ENCODE measurements at regions of chr3 and their contacts with region 1.

Region 1: DNA sequence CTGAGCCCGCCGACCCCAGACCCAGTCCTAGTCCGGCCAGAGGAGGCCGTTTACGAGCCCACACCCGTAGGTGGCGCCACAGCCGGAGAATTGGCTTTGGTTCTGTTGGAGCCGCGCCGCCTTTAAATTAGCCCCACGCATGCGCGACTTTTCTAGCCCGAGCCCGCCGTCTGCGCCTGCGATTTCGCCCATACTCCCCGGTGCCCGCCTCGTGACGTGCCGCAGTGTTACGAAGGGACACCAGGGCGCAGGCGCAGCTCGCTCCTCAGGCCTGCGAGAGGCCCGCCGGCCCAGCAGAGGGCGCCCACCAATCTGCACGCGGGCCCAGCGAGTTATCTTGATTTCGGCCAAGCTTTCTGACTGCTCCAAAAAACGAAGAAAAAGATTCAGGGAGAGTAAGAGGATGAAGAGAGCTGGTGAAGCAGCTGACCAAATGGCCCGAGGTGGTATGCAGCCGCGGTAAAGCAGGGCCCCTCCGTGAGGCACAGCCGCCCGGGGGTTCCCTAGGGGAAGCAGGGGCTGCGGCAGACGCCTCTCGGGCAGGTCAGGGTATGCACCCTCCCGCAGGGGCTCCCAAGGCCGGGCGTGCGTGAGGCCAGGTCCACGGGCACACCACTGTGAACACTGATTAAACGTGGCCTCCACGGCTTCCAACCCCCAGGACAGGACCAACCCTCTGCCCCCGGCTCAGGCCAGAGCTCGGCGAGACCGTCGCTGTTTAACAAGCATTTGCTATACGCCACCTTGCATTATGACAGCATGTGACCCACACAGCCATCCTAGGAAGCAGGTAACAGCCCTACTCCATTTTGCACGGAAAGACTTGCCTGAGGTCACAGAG is 32.8 kb downstream of the RPN1 start:
- DNase-seq: peak; percentile 98 to 99 (median 99)
- H3K4me3 ChIP-seq: peak overlapping the region; percentile 81 to 91
- H3K4me3 Mint-ChIP-seq: peak overlapping the region; percentile 93 to 99 (median 96)
- H3K27ac ChIP-seq: peak overlapping the region; percentile 88
- H3K27ac Mint-ChIP-seq: peak overlapping the region; percentile 93 to 99 (median 98)
- H3K4me1 ChIP-seq: peaks cover 23% of the 10 kb centered on the region
- H3K4me1 Mint-ChIP-seq: peaks cover 17 to 30% (median 23%) of the 10 kb centered on the region in 4 donors
- H3K27me3 ChIP-seq: no peaks in the 10 kb centered on the region
- H3K27me3 Mint-ChIP-seq: no peaks in the 10 kb centered on the region

Region 2: DNA sequence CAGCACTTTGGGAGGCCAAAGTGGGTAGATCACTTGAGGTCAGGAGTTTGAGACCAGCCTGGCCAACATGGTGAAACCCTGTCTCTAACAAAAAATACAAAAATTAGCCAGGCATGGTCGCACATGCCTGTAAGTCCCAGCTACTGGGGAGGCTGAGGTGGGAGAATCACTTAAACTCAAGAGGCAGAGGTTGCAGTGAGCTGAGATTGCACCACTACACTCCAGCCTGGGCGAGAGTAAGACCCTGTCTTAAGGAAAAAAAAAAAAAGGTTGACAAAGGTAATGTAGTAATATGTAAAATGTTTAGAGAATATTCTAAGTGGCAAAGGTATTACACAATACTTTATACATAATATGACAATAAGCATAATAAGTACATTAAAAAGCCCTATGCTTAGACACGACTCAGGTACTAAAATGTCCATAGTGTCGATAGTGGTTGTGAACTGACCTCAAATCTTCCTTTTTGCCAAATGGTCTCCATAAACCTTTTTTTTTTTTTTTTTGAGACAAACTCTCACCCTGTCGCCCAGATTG is 16.4 kb after region 1 on chr3:
- CTCF ChIA-PET with region 1: interaction called, 11 read pairs
- POLR2A ChIA-PET with region 1: interaction called, 4 read pairs
- intact Hi-C with region 1: no loop called
- DNase-seq: no peak
- H3K4me3 ChIP-seq: no peak overlapping the region
- H3K4me3 Mint-ChIP-seq: no peak overlapping the region
- H3K27ac ChIP-seq: no peak overlapping the region
- H3K27ac Mint-ChIP-seq: peak overlapping the region in 1 of 7 donors; percentile 52
- H3K4me1 ChIP-seq: no peaks in the 10 kb centered on the region
- H3K4me1 Mint-ChIP-seq: peaks cover 7 to 17% (median 16%) of the 10 kb centered on the region in 4 donors
- H3K27me3 ChIP-seq: no peaks in the 10 kb centered on the region
- H3K27me3 Mint-ChIP-seq: no peaks in the 10 kb centered on the region

Region 3: GRCh38 chr3:128725932-128726690 is 108.3 kb after region 1 on chr3 and contains the start of gene RAB7A:
- CTCF ChIA-PET with region 1: interaction called, 9 read pairs
- POLR2A ChIA-PET with region 1: interaction called, 3 read pairs
- intact Hi-C with region 1: loop called (anchors 1 kb)
- DNase-seq: peak; percentile 96 to 97 (median 96)
- H3K4me3 ChIP-seq: peak within 1 kb of the TSS; percentile 79 to 86
- H3K4me3 Mint-ChIP-seq: peak within 1 kb of the TSS; percentile 93 to 100 (median 97)
- H3K27ac ChIP-seq: peak within 1 kb of the TSS; percentile 98
- H3K27ac Mint-ChIP-seq: peak within 1 kb of the TSS; percentile 95 to 98 (median 97)
- H3K4me1 ChIP-seq: peaks cover 50% of the 10 kb centered on the region
- H3K4me1 Mint-ChIP-seq: peaks cover 40 to 59% (median 47%) of the 10 kb centered on the region in 4 donors
- H3K27me3 ChIP-seq: no peaks in the 10 kb centered on the region
- H3K27me3 Mint-ChIP-seq: peaks cover 0 to 2% of the 10 kb centered on the region in 2 donors
- total RNA-seq, gene RAB7A: 141 to 152 TPM

Region 4: GRCh38 chr3:128794770-128795649 is 177.2 kb after region 1 on chr3:
- CTCF ChIA-PET with region 1: interaction called, 27 read pairs
- POLR2A ChIA-PET with region 1: interaction called, 6 read pairs
- intact Hi-C with region 1: loop called (anchors 1 kb)
- DNase-seq: peak; percentile 71 to 75 (median 74)
- H3K4me3 ChIP-seq: no peak overlapping the region
- H3K4me3 Mint-ChIP-seq: peak overlapping the region in 4 of 8 donors; percentile 7 to 47 (median 22)
- H3K27ac ChIP-seq: peak overlapping the region; percentile 18
- H3K27ac Mint-ChIP-seq: peak overlapping the region; percentile 73 to 91 (median 88)
- H3K4me1 ChIP-seq: peaks cover 58% of the 10 kb centered on the region
- H3K4me1 Mint-ChIP-seq: peaks cover 37 to 68% (median 55%) of the 10 kb centered on the region in 4 donors
- H3K27me3 ChIP-seq: no peaks in the 10 kb centered on the region
- H3K27me3 Mint-ChIP-seq: no peaks in the 10 kb centered on the region

Region 5: GRCh38 chr3:128845778-128846485 is 228.2 kb after region 1 on chr3:
- CTCF ChIA-PET with region 1: interaction called, 33 read pairs
- POLR2A ChIA-PET with region 1: interaction called, 7 read pairs
- intact Hi-C with region 1: loop called (anchors 1 kb)
- DNase-seq: peak; percentile 71 to 82 (median 73)
- H3K4me3 ChIP-seq: peak overlapping the region in 1 of 2 donors; percentile 52
- H3K4me3 Mint-ChIP-seq: peak overlapping the region; percentile 75 to 95 (median 88)
- H3K27ac ChIP-seq: peak overlapping the region; percentile 29
- H3K27ac Mint-ChIP-seq: peak overlapping the region; percentile 45 to 97 (median 84)
- H3K4me1 ChIP-seq: peaks cover 18% of the 10 kb centered on the region
- H3K4me1 Mint-ChIP-seq: peaks cover 8 to 14% (median 11%) of the 10 kb centered on the region in 4 donors
- H3K27me3 ChIP-seq: no peaks in the 10 kb centered on the region
- H3K27me3 Mint-ChIP-seq: no peaks in the 10 kb centered on the region

Region 6: GRCh38 chr3:128922804-128923459 is 305.2 kb after region 1 on chr3:
- CTCF ChIA-PET with region 1: interaction called, 18 read pairs
- POLR2A ChIA-PET with region 1: interaction called, 7 read pairs
- intact Hi-C with region 1: loop called (anchors 1 kb)
- DNase-seq: peak; percentile 55 to 64 (median 57)
- H3K4me3 ChIP-seq: peak overlapping the region; percentile 29 to 74
- H3K4me3 Mint-ChIP-seq: peak overlapping the region; percentile 82 to 90 (median 85)
- H3K27ac ChIP-seq: no peak overlapping the region
- H3K27ac Mint-ChIP-seq: peak overlapping the region; percentile 70 to 91 (median 88)
- H3K4me1 ChIP-seq: peaks cover 20% of the 10 kb centered on the region
- H3K4me1 Mint-ChIP-seq: peaks cover 26 to 45% (median 37%) of the 10 kb centered on the region in 4 donors
- H3K27me3 ChIP-seq: no peaks in the 10 kb centered on the region
- H3K27me3 Mint-ChIP-seq: no peaks in the 10 kb centered on the region